ENCODE measurements at regions of chr3 and their contacts with region 1.

Region 1: DNA sequence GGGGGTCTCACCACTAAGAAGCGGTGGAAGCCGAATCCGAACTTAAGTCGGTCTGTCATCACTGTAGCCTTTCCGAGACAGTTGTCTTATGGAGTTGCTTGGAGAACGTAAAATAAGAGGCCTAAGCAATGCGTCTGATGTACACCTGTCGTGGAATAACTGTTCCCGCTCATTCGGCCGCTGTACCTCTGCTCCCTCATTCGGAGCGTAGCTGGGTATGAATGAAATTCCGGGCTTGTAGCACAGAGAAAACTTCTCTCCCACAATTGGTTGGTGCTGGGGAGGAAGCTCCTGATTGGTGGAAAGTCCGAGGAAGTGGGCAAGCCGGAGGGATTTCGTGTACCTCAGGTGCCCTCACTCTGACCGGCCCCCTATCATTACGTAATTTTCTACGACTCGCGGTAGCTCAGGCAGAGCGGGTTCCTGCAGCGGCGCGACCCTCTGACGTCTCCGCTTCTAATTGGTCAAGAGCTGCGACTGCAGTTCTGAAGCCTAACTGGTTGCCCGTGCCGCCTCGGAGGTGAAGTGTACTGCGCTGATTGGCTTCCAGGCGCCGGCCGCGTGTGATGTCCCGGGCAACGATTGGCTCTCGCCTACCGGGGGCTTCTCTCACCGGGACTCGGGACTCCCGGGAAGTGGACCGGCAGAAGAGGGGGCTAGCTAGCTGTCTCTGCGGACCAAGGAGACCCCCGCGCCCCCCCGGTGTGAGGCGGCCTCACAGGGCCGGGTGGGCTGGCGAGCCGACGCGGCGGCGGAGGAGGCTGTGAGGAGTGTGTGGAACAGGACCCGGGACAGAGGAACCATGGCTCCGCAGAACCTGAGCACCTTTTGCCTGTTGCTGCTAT is at the start of gene DNAJB11:
- DNase-seq: peak; percentile 100
- H3K4me3 Mint-ChIP-seq: peak within 1 kb of the TSS; percentile 95
- H3K27ac Mint-ChIP-seq: peak within 1 kb of the TSS; percentile 91
- H3K4me1 Mint-ChIP-seq: peaks cover 49% of the 10 kb centered on the region
- H3K27me3 Mint-ChIP-seq: no peaks in the 10 kb centered on the region
- total RNA-seq, gene DNAJB11: 36.9 to 39.5 TPM

Region 2: DNA sequence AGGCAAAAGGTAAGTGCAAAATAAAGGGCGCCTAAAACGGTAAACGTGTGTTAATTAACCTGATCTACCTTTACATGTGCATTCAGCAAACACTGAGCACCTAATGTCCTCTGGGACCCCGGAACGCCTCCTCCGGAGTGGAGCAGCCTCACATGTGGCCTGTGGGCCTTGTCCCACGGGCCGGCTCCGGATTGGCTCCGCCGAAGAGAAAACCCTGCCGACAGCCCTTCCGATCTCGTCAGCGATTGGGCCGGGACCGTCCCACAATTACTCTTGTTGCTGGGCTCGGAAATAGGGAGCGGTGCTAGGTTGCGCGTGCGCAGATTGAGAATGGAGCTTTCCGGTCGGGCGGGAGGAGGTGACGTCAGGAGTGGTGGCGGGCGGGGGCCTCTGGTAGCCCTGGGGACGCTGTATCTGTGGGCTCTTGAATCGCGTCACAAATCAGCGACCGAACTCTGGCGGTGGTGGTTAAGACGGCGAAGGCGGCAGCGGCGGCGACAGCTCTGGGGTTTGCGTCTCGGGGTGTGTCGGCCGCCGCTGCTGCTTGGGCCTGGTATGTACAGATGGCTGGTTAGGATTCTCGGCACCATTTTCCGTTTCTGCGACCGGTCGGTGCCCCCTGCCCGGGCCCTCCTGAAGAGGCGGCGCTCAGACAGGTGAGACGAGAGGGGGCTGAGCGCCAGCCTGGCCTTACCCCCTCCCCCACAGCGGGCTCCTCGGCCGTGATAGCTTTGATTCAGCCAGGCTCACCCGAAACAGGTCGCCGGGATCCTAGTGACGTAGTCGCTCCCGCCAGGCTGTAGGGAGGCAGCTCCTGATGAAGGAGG is 984.2 kb before region 1 on chr3 and contains the start of gene SENP2:
- CTCF ChIA-PET with region 1: no interaction called
- POLR2A ChIA-PET with region 1: no interaction called
- intact Hi-C with region 1: loop called (anchors 5 kb)
- DNase-seq: peak; percentile 100
- H3K4me3 Mint-ChIP-seq: peak within 1 kb of the TSS; percentile 88
- H3K27ac Mint-ChIP-seq: peak within 1 kb of the TSS; percentile 90
- H3K4me1 Mint-ChIP-seq: peaks cover 27% of the 10 kb centered on the region
- H3K27me3 Mint-ChIP-seq: peaks cover 3% of the 10 kb centered on the region
- total RNA-seq, gene SENP2: 29.2 to 29.6 TPM

Region 3: DNA sequence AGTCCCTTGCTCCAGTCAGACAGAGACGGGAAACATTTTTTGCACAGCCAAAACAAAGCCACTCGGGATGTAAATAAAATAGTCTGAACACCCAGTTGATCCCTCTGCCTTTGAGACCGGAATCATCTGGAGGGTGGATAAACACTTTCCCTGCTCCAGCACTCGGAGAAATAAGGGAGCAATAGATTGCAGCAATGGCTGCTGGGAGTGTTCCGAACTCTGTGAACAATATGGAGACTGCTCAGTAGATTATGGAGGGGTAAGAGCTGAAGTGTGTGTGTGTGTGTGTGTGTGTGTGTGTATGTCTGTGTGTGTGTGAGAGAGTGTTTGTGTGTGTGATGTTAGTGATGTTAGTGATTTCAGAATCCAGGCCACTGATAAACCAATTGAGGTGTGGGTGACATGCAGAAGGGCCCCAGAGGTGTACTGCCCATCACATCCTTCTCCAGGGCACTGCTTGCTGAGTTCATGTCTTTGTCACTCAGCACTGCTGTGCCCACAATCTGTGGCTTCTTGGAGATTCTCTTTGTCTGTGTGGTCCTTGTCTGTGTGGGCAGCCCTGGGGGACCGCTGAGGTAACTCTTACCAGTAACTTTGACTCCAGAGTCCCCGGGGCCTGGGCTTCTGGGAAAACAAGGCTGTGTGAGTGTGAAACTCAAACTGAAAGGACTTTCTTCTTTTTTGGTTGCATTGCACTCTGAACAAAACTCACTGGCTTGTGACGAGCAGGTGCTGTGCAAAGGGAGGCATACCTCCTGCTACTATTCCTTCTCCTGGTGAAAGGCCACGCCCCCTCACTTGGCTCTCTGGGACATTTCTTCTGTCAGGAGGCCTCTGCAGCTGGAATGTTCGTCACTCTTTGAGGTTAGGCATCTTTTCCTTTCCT is 49.1 kb before region 1 on chr3:
- CTCF ChIA-PET with region 1: no interaction called
- POLR2A ChIA-PET with region 1: no interaction called
- intact Hi-C with region 1: loop called (anchors 2 kb)
- DNase-seq: peak; percentile 88
- H3K4me3 Mint-ChIP-seq: peak overlapping the region; percentile 50
- H3K27ac Mint-ChIP-seq: peak overlapping the region; percentile 81
- H3K4me1 Mint-ChIP-seq: peaks cover 62% of the 10 kb centered on the region
- H3K27me3 Mint-ChIP-seq: no peaks in the 10 kb centered on the region

Region 4: DNA sequence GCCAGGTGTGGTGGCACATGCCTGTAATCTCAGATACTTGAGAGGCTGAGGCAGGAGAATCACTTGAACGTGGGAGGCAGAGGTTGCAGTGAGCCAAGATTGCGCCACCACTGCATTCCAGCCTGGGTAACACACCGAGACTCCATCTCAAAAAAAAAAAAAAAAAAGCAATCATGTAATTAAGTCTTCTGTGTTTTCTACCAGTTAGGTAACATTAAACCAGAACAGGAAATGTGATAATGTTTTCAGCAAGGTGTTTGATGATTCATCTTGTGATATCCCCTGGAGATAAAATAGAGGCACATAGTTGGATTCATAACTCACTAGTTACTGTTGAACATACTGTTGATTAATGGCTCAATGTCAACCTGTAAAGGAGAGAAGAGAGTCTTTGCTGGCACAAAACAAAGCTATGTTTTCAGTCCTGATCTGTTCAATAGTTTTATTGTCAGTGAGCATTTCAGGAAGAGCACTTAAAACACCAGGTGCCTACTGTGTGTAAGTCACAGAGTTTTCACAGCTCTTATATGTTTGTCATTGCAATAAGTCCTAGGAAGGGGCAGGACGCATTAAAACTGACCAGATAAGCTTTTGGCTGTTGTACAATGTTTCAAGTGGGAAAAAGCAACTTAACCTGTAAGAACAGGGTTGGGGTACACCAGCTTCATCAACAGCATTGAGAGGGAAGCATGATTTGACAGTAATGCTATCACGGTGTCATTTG is 19.7 kb after region 1 on chr3:
- CTCF ChIA-PET with region 1: interaction called, 4 read pairs
- POLR2A ChIA-PET with region 1: interaction called, 10 read pairs
- intact Hi-C with region 1: loop called (anchors 1 kb)
- DNase-seq: peak; percentile 29
- H3K4me3 Mint-ChIP-seq: no peak overlapping the region
- H3K27ac Mint-ChIP-seq: peak overlapping the region; percentile 26
- H3K4me1 Mint-ChIP-seq: peaks cover 22% of the 10 kb centered on the region
- H3K27me3 Mint-ChIP-seq: no peaks in the 10 kb centered on the region

Region 5: DNA sequence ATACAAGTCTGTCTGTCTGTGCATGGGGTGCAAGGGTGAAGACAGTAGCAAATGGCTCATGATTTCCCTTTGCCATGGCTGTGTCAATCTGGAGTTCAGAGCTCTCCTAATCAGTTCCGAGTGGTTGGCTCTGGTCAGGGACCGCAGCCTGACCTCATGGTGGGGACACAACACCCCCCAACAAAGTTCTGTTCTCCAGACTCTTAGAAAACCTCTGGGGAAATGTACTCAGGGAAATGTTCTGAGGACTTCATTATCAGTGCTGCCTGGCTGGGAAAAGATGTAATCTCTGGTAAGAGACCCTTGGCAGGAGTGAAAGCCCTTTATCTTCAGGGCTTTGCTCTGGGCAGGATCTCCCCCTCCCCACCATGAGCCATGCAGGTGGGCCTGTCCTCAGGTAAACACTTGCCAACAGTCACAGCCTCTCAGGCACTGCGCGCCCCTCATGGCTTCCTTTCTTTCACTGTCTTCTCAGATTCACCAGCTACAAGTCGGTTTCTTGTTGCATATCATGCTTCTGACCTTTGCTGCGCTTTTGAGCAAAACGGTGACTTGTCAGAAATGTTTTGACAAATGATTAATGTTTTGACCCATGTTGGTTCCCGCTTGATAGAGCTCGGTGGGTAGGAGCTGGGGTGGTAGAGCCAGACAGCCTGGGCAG is 455.5 kb after region 1 on chr3:
- CTCF ChIA-PET with region 1: no interaction called
- POLR2A ChIA-PET with region 1: no interaction called
- intact Hi-C with region 1: loop called (anchors 5 kb)
- DNase-seq: peak; percentile 59
- H3K4me3 Mint-ChIP-seq: peak overlapping the region; percentile 84
- H3K27ac Mint-ChIP-seq: peak overlapping the region; percentile 96
- H3K4me1 Mint-ChIP-seq: peaks cover 46% of the 10 kb centered on the region
- H3K27me3 Mint-ChIP-seq: no peaks in the 10 kb centered on the region